ENCODE measurements at regions of chr17 and their contacts with region 1.

Region 1: GRCh38 chr17:63621766-63622519 is at the start of gene MAP3K3:
- H3K4me3 ChIP-seq: peak within 1 kb of the TSS; percentile 93
- H3K27ac ChIP-seq: peak within 1 kb of the TSS; percentile 89
- H3K4me1 ChIP-seq: peaks cover 13% of the 10 kb centered on the region
- CTCF ChIP-seq: peak; percentile 93

Region 2: GRCh38 chr17:63478791-63479494 is 143.0 kb before region 1 on chr17:
- CTCF ChIA-PET with region 1: interaction called, 5 read pairs
- POLR2A ChIA-PET with region 1: interaction called, 10 read pairs
- H3K4me3 ChIP-seq: no peak overlapping the region
- H3K27ac ChIP-seq: no peak overlapping the region
- H3K4me1 ChIP-seq: peaks cover 12% of the 10 kb centered on the region
- CTCF ChIP-seq: peak; percentile 95

Region 3: GRCh38 chr17:63600569-63601438 is 21.1 kb before region 1 on chr17 and contains the start of gene TACO1:
- CTCF ChIA-PET with region 1: no interaction called
- POLR2A ChIA-PET with region 1: interaction called, 32 read pairs
- H3K4me3 ChIP-seq: peak within 1 kb of the TSS; percentile 92
- H3K27ac ChIP-seq: peak within 1 kb of the TSS; percentile 75
- H3K4me1 ChIP-seq: no peaks in the 10 kb centered on the region
- CTCF ChIP-seq: no peak; the same call in 1 of the 2 replicates

Region 4: GRCh38 chr17:63675607-63676413 is 53.9 kb after region 1 on chr17:
- CTCF ChIA-PET with region 1: interaction called, 4 read pairs
- POLR2A ChIA-PET with region 1: interaction called, 26 read pairs
- H3K4me3 ChIP-seq: no peak overlapping the region
- H3K27ac ChIP-seq: peak overlapping the region; percentile 83
- H3K4me1 ChIP-seq: peaks cover 22% of the 10 kb centered on the region
- CTCF ChIP-seq: no peak

Region 5: GRCh38 chr17:63741221-63742049 is 119.5 kb after region 1 on chr17 and contains the start of gene STRADA:
- CTCF ChIA-PET with region 1: no interaction called
- POLR2A ChIA-PET with region 1: interaction called, 12 read pairs
- H3K4me3 ChIP-seq: peak within 1 kb of the TSS; percentile 87
- H3K27ac ChIP-seq: peak within 1 kb of the TSS; percentile 95
- H3K4me1 ChIP-seq: peaks cover 6% of the 10 kb centered on the region; the same call in 1 of the 2 replicates
- CTCF ChIP-seq: no peak

Measured in HEK293 (cell line).